Head of caudate nucleus (tissue), 42 donors: ENCODE measurements at regions of chr15 and their contacts with region 1.

Region 1: GRCh38 chr15:83248151-83249029 is 36.1 kb downstream of the BNC1 start:
- DNase-seq: peak in 21 of 42 donors; percentile 2 to 83 (median 53)

Region 2: DNA sequence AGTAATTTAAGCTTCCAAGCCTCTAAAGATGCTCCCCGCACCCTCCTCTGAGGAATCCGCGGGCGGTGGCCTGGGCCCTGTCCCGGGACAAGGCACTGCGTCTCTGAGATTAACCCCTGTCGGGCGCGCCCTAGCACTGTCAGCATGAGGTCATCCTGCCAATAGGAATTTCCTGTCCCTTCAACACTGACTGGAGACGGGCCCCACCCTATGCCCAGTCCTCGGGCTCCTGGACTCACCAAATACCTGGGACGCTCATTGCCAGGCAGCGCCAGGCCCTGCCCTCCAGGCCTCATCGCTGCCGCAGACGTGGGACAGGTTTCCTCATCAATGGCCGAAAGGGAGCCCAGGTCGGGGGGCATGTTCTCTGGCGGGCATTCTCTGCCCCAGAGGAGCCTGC is 131.2 kb after region 1 on chr15:
- intact Hi-C with region 1: loop called (anchors 5 kb)
- DNase-seq: peak in 1 of 42 donors; percentile 37

Region 3: DNA sequence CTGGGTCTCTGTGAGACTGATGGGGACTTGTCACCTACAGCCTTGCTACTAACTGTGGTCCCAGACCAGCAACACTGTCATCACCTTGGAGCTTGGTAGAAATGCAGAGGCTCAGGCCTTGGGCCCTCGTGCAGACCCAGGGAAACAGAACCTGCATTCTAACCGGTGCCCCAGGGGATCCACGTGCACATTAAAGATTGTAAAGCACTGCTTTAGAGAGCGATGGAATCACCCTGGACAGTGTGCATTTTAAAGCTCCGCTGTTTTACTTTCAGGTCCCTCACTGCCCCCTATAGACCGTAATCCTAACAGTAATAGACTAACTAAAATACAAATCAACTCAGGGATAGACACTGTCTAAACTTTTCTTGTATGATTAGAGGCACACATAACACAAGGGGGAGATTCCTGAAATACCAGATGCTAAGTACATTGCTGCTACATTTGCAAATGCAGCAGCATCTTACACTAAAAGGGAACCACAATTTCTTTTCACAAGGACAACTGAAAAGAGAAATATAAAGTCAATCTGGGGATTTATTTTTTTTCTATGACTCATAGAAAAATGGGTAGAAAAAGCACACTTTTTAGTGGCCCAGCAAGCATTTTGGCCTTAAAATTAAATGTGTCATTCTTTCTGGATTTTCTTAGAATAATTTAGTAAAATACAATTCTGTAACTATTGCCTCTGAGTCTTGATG is 188.2 kb after region 1 on chr15:
- intact Hi-C with region 1: loop called (anchors 5 kb)
- DNase-seq: peak in 13 of 42 donors; percentile 12 to 60 (median 36)

Region 4: GRCh38 chr15:83571820-83572707 is 323.7 kb after region 1 on chr15:
- intact Hi-C with region 1: loop called (anchors 10 kb)
- DNase-seq: peak in 12 of 42 donors; percentile 14 to 76 (median 42)